Gastrocnemius medialis (tissue), 4 donors: ENCODE measurements at regions of chrX and their contacts with region 1.

Region 1: GRCh38 chrX:136572030-136572429 is 40.0 kb downstream of the VGLL1 start:
- DNase-seq: no peak
- ATAC-seq: no peak
- H3K4me3 ChIP-seq: no peak overlapping the region
- H3K27ac ChIP-seq: no peak overlapping the region
- H3K4me1 ChIP-seq: no peaks in the 10 kb centered on the region
- H3K27me3 ChIP-seq: peaks cover 0 to 4% (median 0%) of the 10 kb centered on the region in 3 donors
- CTCF ChIP-seq: no peak
- POLR2A ChIP-seq: no peak

Region 2: DNA sequence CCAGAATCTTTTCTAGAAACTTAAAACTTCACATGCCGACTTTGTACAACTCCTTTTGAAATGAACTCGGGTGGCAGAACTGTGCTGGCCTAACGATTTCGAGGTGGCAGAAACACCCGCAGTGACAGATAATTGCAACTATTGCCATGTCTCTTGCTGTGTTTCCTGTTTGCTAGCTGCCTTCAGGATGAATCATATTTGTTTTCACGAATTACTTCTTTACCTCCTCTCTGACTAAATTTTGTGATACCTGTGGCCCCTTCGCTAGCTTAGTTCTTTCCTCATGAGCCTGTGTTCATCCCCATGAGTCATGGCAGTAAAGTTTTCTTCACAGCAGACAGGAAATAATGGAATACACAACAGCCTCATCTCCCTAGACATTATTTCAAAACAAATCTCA is 1685.8 kb before region 1 on chrX:
- in situ Hi-C with region 1: no loop called
- intact Hi-C with region 1: no loop called
- DNase-seq: no peak
- ATAC-seq: no peak
- H3K4me3 ChIP-seq: no peak overlapping the region
- H3K27ac ChIP-seq: no peak overlapping the region
- H3K4me1 ChIP-seq: no peaks in the 10 kb centered on the region
- H3K27me3 ChIP-seq: no peaks in the 10 kb centered on the region
- CTCF ChIP-seq: no peak
- POLR2A ChIP-seq: no peak

Region 3: DNA sequence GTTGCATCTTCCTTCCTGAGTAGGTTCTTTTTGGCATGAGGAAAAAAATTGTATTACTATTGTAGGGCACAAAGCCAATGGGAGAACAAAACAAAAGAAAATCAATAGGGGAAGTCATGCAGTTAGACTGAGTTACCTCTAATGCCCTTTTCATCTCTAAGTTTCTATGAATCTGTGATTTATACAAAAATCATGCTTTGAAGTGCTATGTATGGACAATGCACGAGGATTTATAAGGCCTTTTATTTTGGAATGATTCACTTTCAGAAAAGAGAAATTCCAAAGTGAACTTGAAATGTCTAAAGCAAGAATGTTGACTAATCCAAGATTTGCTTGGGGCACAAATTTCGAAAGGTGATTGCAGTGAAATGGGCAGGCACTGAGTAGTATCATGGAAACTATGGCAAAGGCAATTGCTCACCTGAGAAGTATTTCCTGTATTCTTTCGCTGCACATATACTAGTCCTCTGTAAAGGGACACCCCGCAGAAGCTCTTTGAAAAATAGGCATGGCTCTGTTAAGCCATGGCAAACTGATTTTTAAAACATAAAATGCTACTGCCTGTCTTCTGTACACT is 218.4 kb before region 1 on chrX:
- in situ Hi-C with region 1: loop called in 1 of 4 experiments (anchors 25 kb)
- intact Hi-C with region 1: no loop called
- DNase-seq: no peak
- ATAC-seq: no peak
- H3K4me3 ChIP-seq: no peak overlapping the region
- H3K27ac ChIP-seq: no peak overlapping the region
- H3K4me1 ChIP-seq: no peaks in the 10 kb centered on the region
- H3K27me3 ChIP-seq: no peaks in the 10 kb centered on the region
- CTCF ChIP-seq: no peak
- POLR2A ChIP-seq: no peak

Region 4: DNA sequence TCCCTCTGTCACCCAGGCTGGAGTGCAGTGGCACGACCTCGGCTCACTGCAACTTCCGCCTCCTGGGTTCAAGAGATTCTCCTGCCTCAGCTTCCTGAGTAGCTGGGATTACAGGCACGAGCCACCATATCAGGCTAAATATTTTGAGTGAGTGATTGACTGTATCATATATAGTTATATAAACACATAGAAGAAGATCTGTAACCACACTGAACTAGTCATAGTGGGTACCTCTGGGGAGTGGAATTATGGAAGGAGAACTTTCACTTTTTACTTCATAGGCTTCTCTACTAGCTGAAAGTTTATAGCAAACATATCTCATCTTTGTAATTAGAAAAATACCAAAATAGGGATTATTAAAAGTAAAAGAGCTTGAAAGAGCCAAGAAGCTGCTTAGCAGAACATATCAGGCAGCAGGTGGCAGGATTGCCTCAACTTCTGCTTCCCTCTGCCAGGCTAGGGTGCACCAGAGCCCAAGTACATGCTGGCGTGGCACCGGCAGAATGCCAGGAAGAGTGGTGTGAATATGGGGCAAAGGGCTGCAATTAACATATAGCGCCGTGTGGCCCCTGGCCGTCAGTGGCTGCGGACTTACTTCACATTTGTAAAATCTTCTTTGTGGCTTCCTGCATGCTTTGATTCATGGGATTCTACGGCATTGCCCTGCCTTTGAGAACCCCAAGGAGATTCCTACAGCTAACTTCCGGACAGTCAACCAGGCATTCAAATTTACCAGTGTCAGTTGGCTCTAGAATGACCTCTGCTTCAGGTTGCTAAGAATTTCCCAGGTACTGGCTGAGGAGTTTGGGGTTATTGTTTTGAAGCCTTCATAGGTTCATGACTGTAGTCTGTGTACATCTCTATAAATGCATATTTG is 36.5 kb after region 1 on chrX:
- in situ Hi-C with region 1: no loop called
- intact Hi-C with region 1: no loop called
- DNase-seq: peak; percentile 2 to 15
- ATAC-seq: no peak
- H3K4me3 ChIP-seq: no peak overlapping the region
- H3K27ac ChIP-seq: no peak overlapping the region
- H3K4me1 ChIP-seq: no peaks in the 10 kb centered on the region
- H3K27me3 ChIP-seq: no peaks in the 10 kb centered on the region
- CTCF ChIP-seq: peak in 1 of 5 experiments; percentile 29
- POLR2A ChIP-seq: no peak

Region 5: DNA sequence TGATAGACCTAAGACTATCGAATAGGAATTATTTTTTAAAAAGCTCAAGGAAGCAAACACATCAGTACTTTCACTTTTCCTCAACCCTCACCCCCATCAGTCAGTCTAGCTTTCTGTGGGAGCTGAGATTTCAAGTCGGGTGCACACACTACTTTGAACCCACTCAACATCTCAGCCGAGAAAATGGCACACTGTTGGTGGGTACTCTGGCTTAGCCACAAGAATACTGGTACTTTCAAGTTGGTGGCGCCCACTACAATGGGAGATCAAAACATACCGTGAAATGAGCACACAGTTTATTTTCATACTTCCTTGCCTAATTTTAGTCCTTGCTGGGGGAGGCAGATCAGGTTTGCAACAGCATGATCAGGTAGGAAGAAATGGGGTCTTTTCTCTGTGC is 86.1 kb after region 1 on chrX:
- in situ Hi-C with region 1: no loop called
- intact Hi-C with region 1: no loop called
- DNase-seq: no peak
- ATAC-seq: no peak
- H3K4me3 ChIP-seq: no peak overlapping the region
- H3K27ac ChIP-seq: no peak overlapping the region
- H3K4me1 ChIP-seq: no peaks in the 10 kb centered on the region
- H3K27me3 ChIP-seq: no peaks in the 10 kb centered on the region
- CTCF ChIP-seq: no peak
- POLR2A ChIP-seq: no peak

Region 6: DNA sequence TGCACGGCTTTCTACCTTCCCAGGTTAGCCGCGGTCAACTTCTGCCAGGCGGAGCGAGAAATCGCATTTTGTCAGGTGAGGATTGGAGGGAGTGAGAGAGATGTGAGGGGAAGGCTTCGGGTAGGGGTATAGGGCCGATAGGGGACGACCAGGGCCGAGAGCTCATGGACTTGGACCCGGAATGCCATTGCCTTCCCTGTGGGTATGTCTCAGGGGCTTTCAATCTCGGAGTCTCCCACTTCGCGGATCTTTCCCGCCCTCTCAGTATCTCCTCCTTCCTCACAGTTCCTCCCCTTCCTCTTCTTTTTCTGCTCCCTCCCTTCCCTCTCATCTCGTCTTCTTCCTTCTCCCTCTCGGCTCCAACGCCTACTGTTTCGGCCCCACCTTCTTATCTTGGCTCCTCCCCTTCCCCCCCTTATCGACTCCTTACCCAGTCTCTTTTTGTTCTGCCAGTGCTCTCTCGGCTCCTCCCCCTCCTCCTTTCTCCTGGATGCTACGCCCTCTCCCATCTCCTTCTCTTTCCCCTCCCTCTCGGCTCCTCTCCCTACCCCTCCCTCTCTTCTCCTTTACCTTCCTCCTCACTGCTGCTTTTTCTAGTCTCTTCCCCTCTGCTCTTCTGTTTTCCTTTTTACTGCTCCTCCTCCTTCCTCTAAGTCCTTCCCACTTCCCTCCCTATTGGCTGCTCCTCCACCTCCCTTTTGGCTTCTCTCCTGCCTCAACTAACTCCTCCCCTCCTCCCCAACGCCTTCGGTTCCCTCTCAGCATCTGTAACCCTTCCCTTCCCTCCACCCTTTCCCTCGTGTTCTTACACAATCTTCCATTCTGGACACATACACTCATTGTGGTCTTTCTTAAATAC is 337.9 kb after region 1 on chrX:
- in situ Hi-C with region 1: no loop called
- intact Hi-C with region 1: no loop called
- DNase-seq: peak; percentile 60 to 76
- ATAC-seq: peak; percentile 85 to 87
- H3K4me3 ChIP-seq: peak overlapping the region; percentile 69 to 84 (median 74)
- H3K27ac ChIP-seq: peak overlapping the region; percentile 79 to 84 (median 82)
- H3K4me1 ChIP-seq: peaks cover 0 to 3% of the 10 kb centered on the region in 2 donors
- H3K27me3 ChIP-seq: no peaks in the 10 kb centered on the region
- CTCF ChIP-seq: no peak
- POLR2A ChIP-seq: peak; percentile 30 to 48